ENCODE measurements at regions of chr12 and their contacts with region 1.

Region 1: DNA sequence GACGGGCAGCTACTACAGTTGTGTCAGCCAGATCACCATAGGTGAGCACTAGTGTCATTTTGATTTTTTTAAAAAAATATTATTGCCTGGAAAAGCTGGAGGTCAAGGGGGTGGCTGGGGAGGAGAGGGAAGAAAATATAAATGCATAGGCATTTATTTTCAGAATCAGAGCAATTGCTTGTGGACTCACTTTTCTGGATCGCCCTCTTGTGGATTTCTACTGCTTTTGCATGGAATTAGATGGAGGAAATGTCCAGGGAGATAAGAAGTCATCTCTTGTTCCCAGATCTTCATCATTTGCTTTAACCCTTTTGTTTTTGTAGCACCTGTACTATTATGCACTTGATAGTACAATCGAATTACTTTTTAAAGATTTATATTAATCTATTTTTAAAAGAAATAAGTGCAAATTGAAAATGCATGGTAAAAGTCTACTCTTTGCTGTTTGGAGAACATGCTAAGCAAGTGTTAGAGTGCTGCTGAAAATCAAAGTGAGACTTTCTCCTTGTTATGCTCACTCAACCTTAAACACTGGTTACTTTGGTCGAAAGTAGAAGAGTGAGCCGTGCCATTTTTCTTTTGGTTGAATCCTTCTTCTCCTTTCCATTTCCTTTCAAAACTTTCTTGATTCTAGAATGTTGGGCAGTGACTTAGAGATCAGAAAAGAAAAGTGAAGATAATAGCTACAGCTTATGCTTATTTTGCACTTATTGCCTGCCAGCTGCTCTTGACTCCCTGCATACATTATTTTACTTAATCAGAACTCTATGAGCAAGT is 60.6 kb upstream of the ANO4 start:
- DNase-seq: peak; percentile 80
- H3K4me3 ChIP-seq: no peak overlapping the region
- H3K27ac ChIP-seq: no peak overlapping the region
- H3K4me1 ChIP-seq: no peaks in the 10 kb centered on the region
- H3K27me3 ChIP-seq: no peaks in the 10 kb centered on the region

Region 2: DNA sequence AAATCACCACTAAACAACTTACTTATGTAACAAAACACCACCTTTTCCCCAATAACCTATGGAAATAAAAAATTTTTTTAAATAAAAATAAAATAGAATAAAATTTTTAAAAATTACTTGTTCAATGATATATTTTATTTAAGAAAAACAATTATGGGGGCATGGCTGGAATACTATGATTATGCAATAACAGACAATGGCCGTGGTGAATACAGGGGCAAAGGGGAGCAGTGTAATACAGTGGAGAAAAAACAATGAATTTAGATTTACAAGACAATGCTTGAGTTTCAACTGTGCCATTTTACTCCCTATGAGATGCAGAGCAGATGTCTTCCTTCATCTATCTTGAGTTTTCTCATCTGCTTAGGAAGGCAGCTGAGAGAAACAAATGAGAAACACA is 664.2 kb before region 1 on chr12:
- in situ Hi-C with region 1: no loop called
- DNase-seq: no peak
- H3K4me3 ChIP-seq: no peak overlapping the region
- H3K27ac ChIP-seq: no peak overlapping the region
- H3K4me1 ChIP-seq: no peaks in the 10 kb centered on the region
- H3K27me3 ChIP-seq: no peaks in the 10 kb centered on the region

Region 3: GRCh38 chr12:100632445-100632892 is 101.5 kb before region 1 on chr12:
- in situ Hi-C with region 1: no loop called
- DNase-seq: no peak
- H3K4me3 ChIP-seq: no peak overlapping the region
- H3K27ac ChIP-seq: no peak overlapping the region
- H3K4me1 ChIP-seq: no peaks in the 10 kb centered on the region
- H3K27me3 ChIP-seq: no peaks in the 10 kb centered on the region

Region 4: DNA sequence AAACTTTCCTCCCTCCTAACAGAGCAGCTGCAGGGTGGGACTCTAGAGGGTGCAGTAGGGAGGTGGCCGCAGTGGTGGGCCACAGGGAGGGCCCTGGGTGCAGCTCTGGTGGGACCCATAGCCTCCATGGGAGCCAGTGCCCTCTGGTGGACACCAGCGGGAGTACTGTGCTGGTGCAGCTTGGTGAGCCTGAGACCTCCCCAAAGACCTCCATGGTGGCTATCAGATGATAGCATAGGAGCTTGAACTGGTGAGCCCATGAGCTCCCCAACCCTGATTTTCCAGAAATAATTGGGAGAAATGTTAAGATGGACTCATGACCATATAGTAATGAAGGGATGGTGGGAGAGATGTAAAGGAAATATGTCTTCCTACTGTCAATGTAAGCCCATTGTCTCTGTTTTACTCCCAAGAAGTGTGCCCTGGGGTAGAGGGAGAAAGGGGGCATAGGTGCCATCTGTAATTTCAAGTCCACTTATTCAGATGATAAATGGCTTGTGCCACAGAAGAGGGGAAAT is 61.9 kb before region 1 on chr12:
- in situ Hi-C with region 1: loop called (anchors 10 kb)
- DNase-seq: peak; percentile 17
- H3K4me3 ChIP-seq: no peak overlapping the region
- H3K27ac ChIP-seq: no peak overlapping the region
- H3K4me1 ChIP-seq: 0 out of 2 replicates have a peak, but pooled peaks cover 5% of the 10 kb centered on the region
- H3K27me3 ChIP-seq: no peaks in the 10 kb centered on the region; the same call in none of the 2 replicates